ENCODE measurements at regions of chr11 and their contacts with region 1.

Region 1: GRCh38 chr11:128290106-128290840 is 297.1 kb downstream of the ETS1 start:
- DNase-seq: no peak
- H3K4me3 ChIP-seq: peak overlapping the region in 2 of 4 donors; percentile 2 to 49
- H3K27ac ChIP-seq: peak overlapping the region; percentile 55 to 77 (median 66)
- H3K4me1 ChIP-seq: peaks cover 0 to 29% (median 5%) of the 10 kb centered on the region in 3 donors
- H3K27me3 ChIP-seq: no peaks in the 10 kb centered on the region
- CTCF ChIP-seq: peak; percentile 81 to 88 (median 84)
- POLR2A ChIP-seq: peak in 1 of 4 donors; percentile 47

Region 2: DNA sequence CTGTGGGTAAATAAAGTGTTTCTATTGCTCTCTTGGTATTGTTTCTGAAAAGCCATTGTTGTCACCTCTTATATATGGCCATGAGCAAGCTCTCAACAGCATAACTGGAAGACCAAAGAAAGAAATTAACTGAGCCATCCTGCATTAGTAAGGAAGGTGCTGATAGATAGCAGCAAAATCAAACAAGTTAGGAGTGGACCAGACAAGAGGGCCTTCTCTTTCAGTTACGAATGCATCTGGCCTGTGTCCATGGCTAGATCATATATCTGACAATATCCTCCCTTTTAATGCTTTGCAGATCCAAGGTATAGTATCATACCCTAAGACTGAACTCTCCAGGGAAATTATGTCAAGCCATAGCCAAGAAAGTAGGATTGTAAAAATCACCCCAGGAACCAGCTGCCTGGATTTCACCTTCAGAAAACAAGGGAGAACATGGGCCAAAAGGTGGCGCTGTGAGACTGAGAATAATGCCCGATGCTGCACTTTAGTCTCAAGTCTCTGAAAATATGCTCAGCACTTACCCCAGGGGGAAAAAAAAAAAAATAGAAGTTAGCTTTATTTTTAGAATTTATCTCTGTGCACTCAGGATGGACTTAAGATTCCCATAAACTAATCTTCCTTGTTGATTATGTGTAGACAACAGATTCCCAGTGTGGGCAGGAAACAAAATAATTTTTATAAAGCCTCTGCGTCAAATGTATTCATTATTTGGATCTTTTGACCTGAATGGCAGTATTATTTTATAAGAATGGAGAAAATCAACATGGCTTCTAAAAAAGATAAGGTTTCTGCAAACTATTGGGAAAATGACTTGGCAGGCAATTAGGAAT is 118.0 kb before region 1 on chr11:
- intact Hi-C with region 1: loop called (anchors 10 kb)
- DNase-seq: peak; percentile 11
- H3K4me3 ChIP-seq: no peak overlapping the region
- H3K27ac ChIP-seq: no peak overlapping the region
- H3K4me1 ChIP-seq: peaks cover 0 to 17% (median 0%) of the 10 kb centered on the region in 3 donors
- H3K27me3 ChIP-seq: peaks cover 0 to 10% (median 0%) of the 10 kb centered on the region in 4 donors
- CTCF ChIP-seq: peak; percentile 65 to 82 (median 75)
- POLR2A ChIP-seq: no peak

Region 3: DNA sequence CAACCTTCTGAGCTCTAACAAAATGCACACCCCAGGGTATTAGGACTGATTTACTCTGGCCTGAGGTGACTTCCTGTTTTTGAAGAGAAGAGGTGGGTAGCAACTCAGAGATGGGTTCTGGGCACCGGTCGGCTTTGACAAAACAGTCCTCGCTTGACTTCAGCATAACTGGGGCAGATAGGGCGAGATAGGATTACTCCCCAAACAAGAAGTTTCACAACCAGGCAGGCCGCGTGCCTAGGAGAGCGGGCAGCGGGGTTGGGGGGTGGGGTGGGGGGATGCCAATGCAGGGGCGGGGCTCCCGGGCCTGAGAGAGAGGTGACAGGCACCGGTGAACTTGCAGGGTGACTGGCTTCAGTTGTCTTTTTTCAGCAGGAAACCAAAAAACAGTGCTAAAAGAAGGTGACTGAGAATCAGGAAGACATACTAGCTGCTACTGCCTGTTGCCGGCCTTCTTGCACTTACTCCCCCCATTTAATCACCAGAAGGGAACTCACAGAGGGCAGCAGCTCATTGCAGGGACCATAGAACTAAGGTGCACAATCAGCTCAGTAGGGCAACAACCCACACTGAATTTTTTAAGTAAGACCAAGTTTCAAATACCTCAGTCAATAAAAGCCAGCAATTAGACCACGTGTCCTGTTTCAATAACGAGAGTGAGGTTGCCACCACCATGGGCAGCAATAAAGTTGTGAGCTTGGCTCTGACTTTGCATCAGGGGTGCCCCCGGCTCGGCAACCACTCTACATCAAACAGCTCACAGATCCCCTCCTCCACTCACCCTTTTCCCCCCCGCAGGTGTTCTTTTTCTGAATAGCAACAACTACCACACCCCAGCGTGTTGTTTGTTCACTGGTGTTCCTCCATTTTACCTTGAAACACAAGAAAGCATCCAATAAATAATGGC is 334.2 kb after region 1 on chr11:
- intact Hi-C with region 1: loop called (anchors 5 kb)
- DNase-seq: no peak
- H3K4me3 ChIP-seq: no peak overlapping the region
- H3K27ac ChIP-seq: peak overlapping the region in 2 of 4 donors; percentile 23 to 72
- H3K4me1 ChIP-seq: peaks cover 0 to 24% (median 0%) of the 10 kb centered on the region in 3 donors
- H3K27me3 ChIP-seq: no peaks in the 10 kb centered on the region
- CTCF ChIP-seq: no peak
- POLR2A ChIP-seq: peak in 1 of 4 donors; percentile 26

Region 4: DNA sequence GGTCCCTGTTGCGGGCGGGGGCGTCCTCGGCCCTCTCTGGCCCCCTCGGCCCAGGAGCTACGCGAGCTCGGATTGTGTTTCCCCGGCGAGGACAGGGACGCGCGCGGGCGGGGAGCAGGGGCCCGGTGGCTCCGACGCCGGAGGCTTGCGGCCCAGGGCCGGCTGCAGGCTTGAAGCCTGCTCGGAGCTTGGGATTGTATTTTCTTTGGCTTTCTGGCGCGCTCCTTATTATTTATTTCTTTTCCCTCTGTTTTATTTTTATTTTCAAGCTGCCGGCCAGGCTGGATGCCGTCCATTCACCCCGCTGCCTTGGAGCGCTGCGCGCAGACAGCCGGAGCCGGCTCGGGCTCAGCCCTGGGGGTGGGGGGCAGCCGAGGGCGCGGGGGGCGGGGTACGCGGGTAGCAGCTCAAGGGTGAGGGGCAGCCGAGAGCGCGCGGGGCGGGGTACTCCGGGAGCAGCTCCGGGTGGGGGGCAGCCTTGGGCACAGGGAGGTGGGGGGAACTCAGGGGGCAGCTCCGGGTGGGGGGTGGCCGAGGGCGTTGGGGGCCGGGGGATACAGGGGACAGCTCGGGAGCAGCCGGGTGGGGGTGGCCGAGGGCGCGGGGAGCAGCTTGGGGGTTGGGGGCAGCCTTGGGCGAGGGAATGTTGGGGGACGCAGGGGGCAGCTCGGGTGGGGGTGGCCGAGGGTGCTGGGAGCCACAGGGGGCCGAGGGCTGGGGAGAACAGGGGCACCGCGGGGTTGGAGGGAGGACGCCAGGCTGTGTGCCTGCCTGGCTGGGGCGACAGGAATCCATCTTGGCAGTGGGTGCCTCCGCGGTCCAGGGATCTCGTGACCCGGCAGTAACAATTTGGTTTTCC is 534.1 kb after region 1 on chr11:
- intact Hi-C with region 1: loop called (anchors 10 kb)
- DNase-seq: no peak
- H3K4me3 ChIP-seq: peak overlapping the region in 2 of 4 donors; percentile 13 to 44
- H3K27ac ChIP-seq: no peak overlapping the region
- H3K4me1 ChIP-seq: peaks cover 0 to 9% (median 3%) of the 10 kb centered on the region in 3 donors
- H3K27me3 ChIP-seq: peaks cover 0 to 27% (median 0%) of the 10 kb centered on the region in 4 donors
- CTCF ChIP-seq: no peak
- POLR2A ChIP-seq: no peak

Measured in esophagus squamous epithelium (tissue), 5 donors.